WTC11 (cell line): ENCODE measurements at regions of chr3 and their contacts with region 1.

Region 1: DNA sequence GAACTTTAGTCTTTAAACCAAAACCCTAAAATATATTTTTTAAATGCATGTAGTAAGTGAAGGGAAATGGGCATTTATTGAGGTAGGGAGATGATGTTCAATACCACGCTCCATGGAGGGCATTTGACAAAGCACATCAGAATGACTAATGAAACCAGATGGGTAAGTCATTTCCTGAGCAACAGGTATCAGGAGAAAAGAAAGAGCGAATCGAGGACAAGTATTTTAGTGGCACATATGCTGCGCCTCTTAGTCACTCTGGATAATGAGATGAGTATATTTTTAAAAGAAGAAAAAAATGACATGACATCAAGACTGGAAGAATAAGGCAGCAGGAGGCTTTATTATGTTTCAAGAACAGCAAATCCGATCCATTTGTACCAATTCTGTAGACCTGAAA is 129.0 kb upstream of the ARHGEF3 start:
- DNase-seq: no peak
- ATAC-seq: no peak
- H3K4me3 Mint-ChIP-seq: no peak overlapping the region
- H3K27ac Mint-ChIP-seq: no peak overlapping the region
- H3K4me1 Mint-ChIP-seq: peaks cover 25% of the 10 kb centered on the region
- H3K27me3 Mint-ChIP-seq: no peaks in the 10 kb centered on the region
- CTCF ChIP-seq: no peak

Region 2: DNA sequence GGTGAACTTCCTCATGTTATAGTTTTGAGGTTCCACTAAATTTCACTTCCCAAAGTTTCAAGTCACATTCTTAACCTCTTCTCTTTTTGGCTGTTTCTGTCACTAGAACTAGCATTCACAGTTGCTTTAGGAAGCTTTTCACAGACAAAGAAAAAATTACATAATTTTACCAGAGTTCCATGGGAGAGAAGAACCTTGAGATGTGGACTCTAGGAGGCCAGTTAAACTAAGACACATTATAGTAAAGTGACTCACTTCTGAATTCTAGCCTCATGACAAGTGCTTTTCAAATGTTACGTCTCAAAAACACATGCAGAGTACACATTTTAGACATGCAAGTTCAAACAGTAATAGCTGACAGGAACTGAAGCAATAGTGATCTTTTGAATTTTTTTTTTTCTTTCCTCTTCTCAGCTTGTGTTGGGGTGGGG is 1963.0 kb before region 1 on chr3:
- CTCF ChIA-PET with region 1: no interaction called
- POLR2A ChIA-PET with region 1: interaction called, 10 read pairs
- DNase-seq: no peak
- ATAC-seq: no peak
- H3K4me3 Mint-ChIP-seq: no peak overlapping the region
- H3K27ac Mint-ChIP-seq: no peak overlapping the region
- H3K4me1 Mint-ChIP-seq: peaks cover 15% of the 10 kb centered on the region
- H3K27me3 Mint-ChIP-seq: no peaks in the 10 kb centered on the region
- CTCF ChIP-seq: no peak

Region 3: DNA sequence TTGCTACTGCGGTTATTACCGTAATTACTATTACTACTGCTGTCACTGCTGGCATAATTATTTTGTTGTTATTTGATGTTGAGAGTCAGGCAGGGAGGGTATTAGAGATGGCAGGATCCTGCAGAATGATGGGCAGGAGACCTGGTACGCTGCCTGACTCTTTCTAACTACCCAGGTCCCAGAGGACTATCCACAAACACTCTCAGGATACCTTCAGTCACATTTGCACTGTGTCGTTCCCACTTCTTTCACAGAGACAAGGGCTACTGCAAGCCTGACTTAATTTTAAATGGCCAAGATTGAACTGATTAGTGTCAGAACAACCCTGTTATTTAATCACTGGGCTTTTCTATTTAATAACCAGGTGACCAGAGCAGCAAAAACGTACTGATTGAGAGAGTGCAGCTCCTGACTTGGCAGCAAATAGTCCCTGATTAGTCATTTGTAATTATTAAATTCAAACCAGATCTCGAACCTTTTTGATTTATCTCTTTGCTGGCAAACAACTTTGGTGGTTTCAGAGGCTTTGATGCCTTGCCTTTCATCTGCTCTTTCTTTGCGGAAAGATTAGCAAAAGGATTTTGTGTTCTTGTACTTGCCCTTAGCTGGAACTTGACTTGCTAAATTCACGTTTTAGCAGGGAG is 40.1 kb before region 1 on chr3:
- CTCF ChIA-PET with region 1: no interaction called
- POLR2A ChIA-PET with region 1: no interaction called
- DNase-seq: no peak
- ATAC-seq: no peak
- H3K4me3 Mint-ChIP-seq: no peak overlapping the region
- H3K27ac Mint-ChIP-seq: no peak overlapping the region
- H3K4me1 Mint-ChIP-seq: peaks cover under 1% of the 10 kb centered on the region; the same call in 1 of the 2 replicates
- H3K27me3 Mint-ChIP-seq: no peaks in the 10 kb centered on the region
- CTCF ChIP-seq: no peak